Gastrocnemius medialis (tissue), 4 donors: ENCODE measurements at regions of chr13 and their contacts with region 1.

Region 1: GRCh38 chr13:57123681-57124080 is 17.0 kb upstream of the PRR20A start:
- DNase-seq: peak in 1 of 2 donors; percentile 19
- ATAC-seq: peak; percentile 66 to 92
- H3K4me3 ChIP-seq: no peak overlapping the region
- H3K27ac ChIP-seq: no peak overlapping the region
- H3K4me1 ChIP-seq: peaks cover 0 to 13% of the 10 kb centered on the region in 2 donors
- H3K27me3 ChIP-seq: no peaks in the 10 kb centered on the region
- CTCF ChIP-seq: no peak
- POLR2A ChIP-seq: no peak

Region 2: GRCh38 chr13:56893843-56894242 is 229.8 kb before region 1 on chr13:
- in situ Hi-C with region 1: no loop called
- intact Hi-C with region 1: no loop called
- DNase-seq: no peak
- ATAC-seq: no peak
- H3K4me3 ChIP-seq: no peak overlapping the region
- H3K27ac ChIP-seq: no peak overlapping the region
- H3K4me1 ChIP-seq: no peaks in the 10 kb centered on the region
- H3K27me3 ChIP-seq: no peaks in the 10 kb centered on the region
- CTCF ChIP-seq: no peak
- POLR2A ChIP-seq: no peak

Region 3: GRCh38 chr13:56923626-56924140 is 200.0 kb before region 1 on chr13:
- in situ Hi-C with region 1: no loop called
- intact Hi-C with region 1: no loop called
- DNase-seq: no peak
- ATAC-seq: no peak
- H3K4me3 ChIP-seq: no peak overlapping the region
- H3K27ac ChIP-seq: no peak overlapping the region
- H3K4me1 ChIP-seq: no peaks in the 10 kb centered on the region
- H3K27me3 ChIP-seq: no peaks in the 10 kb centered on the region
- CTCF ChIP-seq: no peak
- POLR2A ChIP-seq: no peak

Region 4: GRCh38 chr13:57212989-57213388 is 89.3 kb after region 1 on chr13:
- in situ Hi-C with region 1: loop called in 2 of 4 experiments (anchors 25 kb)
- intact Hi-C with region 1: no loop called
- DNase-seq: no peak
- ATAC-seq: no peak
- H3K4me3 ChIP-seq: no peak overlapping the region
- H3K27ac ChIP-seq: no peak overlapping the region
- H3K4me1 ChIP-seq: no peaks in the 10 kb centered on the region
- H3K27me3 ChIP-seq: no peaks in the 10 kb centered on the region
- CTCF ChIP-seq: no peak
- POLR2A ChIP-seq: no peak